Left cardiac atrium (tissue), 4 donors: ENCODE measurements at regions of chr10 and their contacts with region 1.

Region 1: DNA sequence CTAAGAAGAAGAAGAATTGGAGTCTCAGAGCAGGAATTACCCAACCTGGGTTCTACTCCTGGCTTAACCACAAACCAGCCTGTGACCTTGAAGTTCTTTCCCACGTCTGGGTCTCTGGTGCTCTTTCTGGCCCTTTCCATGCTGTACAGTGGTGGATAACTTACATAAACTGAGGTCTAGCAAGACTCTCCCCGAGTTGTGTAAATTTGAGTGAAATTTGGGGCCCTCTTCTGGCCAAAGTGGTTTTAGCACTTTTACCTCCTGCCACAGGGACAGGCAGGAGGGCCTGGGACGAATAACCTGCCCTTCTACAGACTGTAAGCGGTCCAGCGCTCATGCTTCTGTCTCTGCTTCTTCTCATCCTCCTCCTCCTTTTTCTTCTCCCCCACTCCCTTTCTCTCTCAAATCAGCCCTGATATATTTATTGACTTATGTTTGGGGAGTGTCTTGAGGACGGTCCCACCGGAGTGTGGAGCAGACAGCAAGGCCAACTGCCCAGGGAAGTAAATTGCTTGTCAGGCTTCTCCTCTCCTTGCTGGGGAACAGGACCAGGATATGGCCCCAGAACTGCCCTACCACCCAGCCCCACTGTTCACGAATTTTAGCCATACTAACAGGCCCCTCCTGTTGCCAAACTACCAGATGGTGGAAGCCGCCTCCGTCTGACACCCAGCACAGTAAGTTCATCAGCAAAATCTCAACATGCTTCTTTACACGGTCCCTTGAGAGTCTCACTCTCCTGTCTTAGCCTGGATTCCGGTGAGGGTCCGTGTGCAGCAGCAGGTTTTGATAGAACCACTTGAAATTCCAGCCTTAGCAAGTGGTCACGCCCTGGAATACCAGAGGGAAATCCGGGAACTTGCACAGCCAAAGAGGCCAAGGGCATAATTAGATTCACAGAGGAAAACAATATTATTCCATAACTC is 4.0 kb upstream of the SH3PXD2A start:
- DNase-seq: no peak
- ATAC-seq: peak; percentile 62 to 71

Region 2: GRCh38 chr10:103491493-103492381 is 367.7 kb before region 1 on chr10:
- intact Hi-C with region 1: no loop called
- DNase-seq: no peak
- ATAC-seq: peak; percentile 70 to 82

Region 3: GRCh38 chr10:103605359-103606095 is 253.9 kb before region 1 on chr10:
- intact Hi-C with region 1: loop called in 1 of 2 experiments (anchors 10 kb)
- DNase-seq: peak; percentile 51
- ATAC-seq: peak; percentile 51 to 71

Region 4: GRCh38 chr10:103712570-103713498 is 146.6 kb before region 1 on chr10:
- intact Hi-C with region 1: loop called (anchors 2 kb)
- DNase-seq: peak; percentile 83
- ATAC-seq: peak; percentile 77 to 89

Region 5: GRCh38 chr10:103772096-103772845 is 87.2 kb before region 1 on chr10:
- intact Hi-C with region 1: loop called in 1 of 2 experiments (anchors 10 kb)
- DNase-seq: peak; percentile 86
- ATAC-seq: peak; percentile 83 to 96

Region 6: GRCh38 chr10:103781329-103782061 is 77.9 kb before region 1 on chr10:
- intact Hi-C with region 1: loop called (anchors 10 kb)
- DNase-seq: no peak
- ATAC-seq: no peak

Region 7: GRCh38 chr10:103795634-103796274 is 63.7 kb before region 1 on chr10:
- intact Hi-C with region 1: no loop called
- DNase-seq: no peak
- ATAC-seq: no peak

Region 8: GRCh38 chr10:104146882-104147281 is 287.5 kb after region 1 on chr10:
- intact Hi-C with region 1: no loop called
- DNase-seq: no peak
- ATAC-seq: no peak

Region 9: DNA sequence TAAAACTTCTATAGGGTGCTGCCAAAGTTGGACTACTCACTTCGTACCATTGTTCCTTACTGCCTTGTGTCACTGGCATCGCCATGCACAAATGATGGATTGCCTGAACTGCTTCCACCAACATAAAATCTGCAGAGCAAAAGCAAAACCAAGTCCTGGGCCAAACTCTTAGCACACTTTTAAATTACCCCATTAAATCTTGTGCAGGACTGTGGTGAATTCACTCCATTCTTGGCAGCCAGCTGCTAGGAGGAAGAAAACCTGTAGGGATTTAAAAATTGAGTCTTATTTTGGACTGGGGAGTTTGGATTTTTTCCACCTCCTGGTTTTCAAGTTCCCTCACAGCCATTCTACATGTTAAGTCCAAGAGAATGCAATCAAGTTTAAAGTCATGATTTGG is 1428.6 kb after region 1 on chr10:
- intact Hi-C with region 1: no loop called
- DNase-seq: no peak
- ATAC-seq: no peak